PC-3 (cell line): ENCODE measurements at regions of chr3 and their contacts with region 1.

Region 1: DNA sequence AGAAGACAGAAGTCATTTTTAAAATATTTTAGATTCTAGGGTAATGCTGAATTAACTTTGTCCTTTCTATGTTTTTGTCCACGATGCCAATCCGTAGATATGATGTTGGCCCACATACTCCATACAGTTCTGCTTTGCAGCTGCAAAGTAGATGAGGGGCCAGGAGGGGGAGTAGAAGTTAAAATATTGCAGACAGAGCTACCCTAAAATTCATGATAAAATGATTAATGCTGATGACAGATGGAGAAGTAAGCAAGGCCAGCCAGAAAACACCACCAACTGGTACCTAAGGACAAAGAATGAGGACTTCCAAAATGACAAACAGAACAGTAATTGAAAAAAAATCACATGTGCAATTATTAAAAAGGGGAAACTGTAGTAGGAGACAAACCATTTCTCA is 756.6 kb upstream of the ARPP21 start:
- DNase-seq: no peak
- ATAC-seq: peak; percentile 57; the same call in 1 of the 2 replicates
- H3K4me3 ChIP-seq: no peak overlapping the region
- H3K27ac ChIP-seq: no peak overlapping the region
- H3K4me1 ChIP-seq: no peaks in the 10 kb centered on the region
- H3K27me3 ChIP-seq: no peaks in the 10 kb centered on the region
- CTCF ChIP-seq: no peak

Region 2: GRCh38 chr3:34793057-34793456 is 89.7 kb before region 1 on chr3:
- CTCF ChIA-PET with region 1: no interaction called
- POLR2A ChIA-PET with region 1: no interaction called
- intact Hi-C with region 1: loop called (anchors 1 kb)
- DNase-seq: no peak
- ATAC-seq: peak; percentile 98
- H3K4me3 ChIP-seq: no peak overlapping the region
- H3K27ac ChIP-seq: no peak overlapping the region
- H3K4me1 ChIP-seq: no peaks in the 10 kb centered on the region
- H3K27me3 ChIP-seq: no peaks in the 10 kb centered on the region
- CTCF ChIP-seq: no peak

Region 3: GRCh38 chr3:35064761-35065160 is 182.0 kb after region 1 on chr3:
- CTCF ChIA-PET with region 1: no interaction called
- POLR2A ChIA-PET with region 1: no interaction called
- intact Hi-C with region 1: loop called (anchors 10 kb)
- DNase-seq: no peak
- ATAC-seq: no peak
- H3K4me3 ChIP-seq: no peak overlapping the region
- H3K27ac ChIP-seq: no peak overlapping the region
- H3K4me1 ChIP-seq: no peaks in the 10 kb centered on the region
- H3K27me3 ChIP-seq: no peaks in the 10 kb centered on the region
- CTCF ChIP-seq: no peak

Region 4: DNA sequence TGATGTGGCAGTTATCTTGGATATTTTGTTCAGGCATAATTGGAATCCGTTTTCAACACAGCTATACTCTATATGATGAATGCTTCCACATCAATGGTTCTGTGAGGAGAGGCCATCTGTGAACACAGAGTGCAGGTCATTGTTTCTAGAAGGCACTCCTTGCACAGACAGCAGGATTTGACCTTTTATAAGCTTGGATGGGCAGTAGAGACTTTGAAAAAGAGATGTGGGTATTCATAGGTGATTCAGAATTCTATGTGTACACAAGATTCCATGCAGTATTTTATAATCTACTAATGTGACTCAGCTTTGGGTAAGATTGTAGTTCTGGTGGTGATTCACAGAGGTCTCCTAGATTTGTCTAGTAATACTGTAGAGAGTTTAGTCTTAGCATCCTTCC is 769.1 kb after region 1 on chr3:
- CTCF ChIA-PET with region 1: no interaction called
- POLR2A ChIA-PET with region 1: no interaction called
- intact Hi-C with region 1: loop called (anchors 5 kb)
- DNase-seq: peak; percentile 66
- ATAC-seq: peak; percentile 96
- H3K4me3 ChIP-seq: no peak overlapping the region
- H3K27ac ChIP-seq: peak overlapping the region; percentile 31
- H3K4me1 ChIP-seq: peaks cover 7% of the 10 kb centered on the region
- H3K27me3 ChIP-seq: no peaks in the 10 kb centered on the region
- CTCF ChIP-seq: no peak

Region 5: DNA sequence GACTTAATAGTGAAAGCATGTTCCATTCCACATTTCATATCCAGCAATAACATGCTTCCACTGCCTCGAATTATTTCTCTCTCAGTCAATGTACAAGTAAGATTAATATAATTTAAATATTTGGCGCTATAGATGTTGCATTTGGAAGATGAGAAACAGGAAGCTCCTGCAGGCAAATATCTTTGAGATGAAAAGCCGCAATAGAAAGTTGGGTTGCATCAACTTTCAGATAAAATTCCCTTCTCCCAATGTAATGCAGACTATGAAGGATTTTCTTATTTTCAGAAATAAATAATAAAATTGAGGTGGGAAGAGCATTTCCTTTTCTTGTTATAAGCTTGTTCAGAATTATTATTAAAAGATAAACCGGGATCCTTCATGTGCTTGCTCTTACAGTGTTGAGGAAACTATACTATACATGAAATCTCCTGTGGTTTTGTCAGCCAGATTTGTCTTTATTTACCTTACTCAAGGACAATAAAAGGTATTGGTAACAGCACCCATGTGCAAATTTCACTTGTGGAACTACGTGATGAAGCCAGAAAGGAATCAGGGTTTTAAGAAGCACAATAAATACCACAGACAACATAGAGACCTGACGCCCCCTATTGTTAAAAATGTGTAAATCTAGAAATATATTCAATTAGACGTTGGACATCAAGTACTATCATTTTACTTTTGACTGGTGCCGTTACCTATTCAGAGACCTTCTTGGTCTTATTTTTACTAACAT is 1063.5 kb after region 1 on chr3:
- CTCF ChIA-PET with region 1: no interaction called
- POLR2A ChIA-PET with region 1: no interaction called
- intact Hi-C with region 1: loop called (anchors 5 kb)
- DNase-seq: peak; percentile 68
- ATAC-seq: peak; percentile 18
- H3K4me3 ChIP-seq: no peak overlapping the region
- H3K27ac ChIP-seq: peak overlapping the region; percentile 86
- H3K4me1 ChIP-seq: peaks cover 34% of the 10 kb centered on the region
- H3K27me3 ChIP-seq: no peaks in the 10 kb centered on the region
- CTCF ChIP-seq: peak; percentile 76